ENCODE measurements at regions of chr15 and their contacts with region 1.

Region 1: DNA sequence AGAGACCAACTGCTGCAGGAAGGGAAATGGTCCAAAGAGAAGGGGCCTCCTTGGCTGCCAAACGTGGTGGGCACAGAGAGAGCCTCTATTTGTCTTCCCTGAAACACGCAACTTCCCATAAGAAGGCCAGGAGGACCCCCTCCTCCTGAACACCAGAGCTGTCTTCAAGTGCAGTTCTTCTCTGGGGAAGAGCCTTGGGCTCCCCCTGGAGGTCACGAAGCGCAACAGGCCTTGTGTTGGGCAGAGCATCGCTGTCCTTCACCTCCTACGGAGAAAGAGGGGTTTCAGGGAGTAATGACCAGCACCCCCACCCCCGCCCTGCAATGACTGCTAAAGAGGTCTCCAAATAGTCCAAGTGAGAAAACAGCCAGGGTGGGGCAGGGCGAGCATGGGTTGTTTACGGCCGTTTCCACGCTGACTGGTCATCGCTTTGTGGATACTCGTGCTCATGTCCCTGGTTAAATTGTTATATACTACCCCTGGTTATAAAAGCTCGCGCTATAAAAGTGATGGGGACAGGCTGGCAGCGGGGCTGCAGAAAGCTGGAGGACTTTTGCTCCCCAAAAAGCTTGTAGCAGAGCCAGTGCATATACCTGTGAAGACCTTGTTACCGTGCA is 397.5 kb upstream of the ATP10A start:
- DNase-seq: peak in 1 of 5 donors; percentile 31
- ATAC-seq: no peak
- H3K4me3 ChIP-seq: no peak overlapping the region
- H3K27ac ChIP-seq: peak overlapping the region in 6 of 12 donors; percentile 43 to 77 (median 61)
- H3K4me1 ChIP-seq: peaks cover 0 to 17% (median 0%) of the 10 kb centered on the region in 12 donors
- H3K27me3 ChIP-seq: no peaks in the 10 kb centered on the region
- CTCF ChIP-seq: peak; percentile 44 to 69 (median 56)
- POLR2A ChIP-seq: no peak

Region 2: GRCh38 chr15:25493823-25494526 is 766.6 kb before region 1 on chr15:
- intact Hi-C with region 1: loop called in 1 of 10 experiments (anchors 5 kb)
- DNase-seq: no peak
- ATAC-seq: no peak
- H3K4me3 ChIP-seq: no peak overlapping the region
- H3K27ac ChIP-seq: no peak overlapping the region
- H3K4me1 ChIP-seq: no peaks in the 10 kb centered on the region
- H3K27me3 ChIP-seq: no peaks in the 10 kb centered on the region
- CTCF ChIP-seq: no peak
- POLR2A ChIP-seq: no peak

Region 3: DNA sequence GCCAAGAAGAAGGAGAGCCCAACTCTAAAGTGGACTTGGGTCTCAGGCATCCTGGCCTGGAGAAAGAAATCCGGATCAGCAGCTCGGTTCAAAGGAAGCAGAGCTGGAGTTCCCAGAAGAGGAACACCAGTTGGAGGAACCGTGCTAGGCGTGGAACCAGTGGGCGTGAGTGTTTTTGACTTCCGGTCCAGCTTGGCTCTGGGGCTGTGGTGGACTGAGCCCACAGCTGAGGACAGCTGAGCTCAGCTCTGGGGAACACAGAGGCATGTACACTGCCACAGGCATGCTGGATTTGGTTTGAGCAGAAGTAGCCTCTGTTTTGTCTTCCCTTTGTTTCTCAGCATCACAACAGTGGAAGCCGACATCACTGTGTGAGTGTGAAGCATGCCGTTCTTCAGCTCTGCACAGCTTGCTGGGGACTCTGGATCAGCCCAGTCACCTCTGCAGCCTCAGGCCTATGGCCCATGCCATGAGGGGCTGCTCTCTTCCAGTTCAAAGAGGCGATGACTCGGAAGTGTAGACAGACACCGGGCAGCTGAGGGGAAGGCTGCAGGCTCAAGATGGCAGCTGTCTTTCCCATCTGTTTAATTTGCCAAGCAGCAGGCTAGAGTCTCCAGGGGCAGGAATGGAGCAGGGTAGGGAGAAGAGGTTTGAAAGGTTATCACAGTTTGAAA is 636.0 kb before region 1 on chr15:
- intact Hi-C with region 1: no loop called
- DNase-seq: peak in 4 of 5 donors; percentile 44 to 69 (median 60)
- ATAC-seq: peak; percentile 67 to 98 (median 94)
- H3K4me3 ChIP-seq: no peak overlapping the region
- H3K27ac ChIP-seq: peak overlapping the region in 3 of 12 donors; percentile 25 to 31 (median 26)
- H3K4me1 ChIP-seq: peaks cover 0 to 7% (median 0%) of the 10 kb centered on the region in 12 donors
- H3K27me3 ChIP-seq: no peaks in the 10 kb centered on the region
- CTCF ChIP-seq: no peak
- POLR2A ChIP-seq: no peak

Region 4: GRCh38 chr15:26037369-26037768 is 223.3 kb before region 1 on chr15:
- intact Hi-C with region 1: loop called in 1 of 10 experiments (anchors 5 kb)
- DNase-seq: no peak
- ATAC-seq: no peak
- H3K4me3 ChIP-seq: no peak overlapping the region
- H3K27ac ChIP-seq: no peak overlapping the region
- H3K4me1 ChIP-seq: no peaks in the 10 kb centered on the region
- H3K27me3 ChIP-seq: peaks cover 0 to 10% (median 0%) of the 10 kb centered on the region in 9 donors
- CTCF ChIP-seq: peak in 2 of 12 donors; percentile 16 to 27
- POLR2A ChIP-seq: no peak